Psoas muscle (tissue), 8 donors: ENCODE measurements at regions of chr17 and their contacts with region 1.

Region 1: DNA sequence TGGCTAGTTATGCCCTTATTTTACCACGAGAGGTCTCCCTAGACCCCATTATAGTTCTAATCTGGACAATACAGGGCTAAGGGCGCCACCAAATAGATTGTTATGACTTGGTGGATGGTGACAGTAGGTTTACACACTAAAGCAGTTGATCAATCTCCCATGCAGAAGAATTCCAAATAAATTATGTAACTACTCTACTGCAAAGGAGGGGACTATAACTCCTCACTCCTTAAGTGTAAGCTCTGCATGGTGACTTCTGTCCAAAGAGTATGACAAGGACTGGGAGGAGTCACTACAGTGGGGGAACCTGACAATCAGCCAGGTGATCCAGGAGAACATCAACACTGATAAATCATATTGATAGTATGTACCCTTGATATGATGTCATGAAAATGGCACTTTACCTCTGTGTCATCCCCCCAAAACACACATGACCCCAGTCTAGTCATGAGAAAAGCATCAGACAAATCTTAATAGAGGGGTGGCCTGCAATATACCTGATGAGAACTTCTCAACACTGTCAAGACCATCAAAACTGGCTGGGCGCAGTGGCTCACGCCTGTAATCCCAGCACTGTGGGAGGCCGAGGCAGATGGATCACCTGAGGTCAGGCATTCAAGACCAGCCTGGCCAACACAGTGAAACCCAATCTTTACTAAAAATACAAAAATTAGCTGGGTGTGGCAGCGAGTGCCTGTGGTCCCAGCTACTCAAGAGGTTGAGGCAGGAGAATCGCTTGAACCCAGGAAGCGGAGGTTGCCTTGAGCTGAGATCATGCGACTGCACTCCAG is 20.1 kb upstream of the YPEL2 start:
- DNase-seq: no peak
- ATAC-seq: peak; percentile 93 to 98 (median 96)
- H3K4me3 ChIP-seq: no peak overlapping the region
- H3K27ac ChIP-seq: no peak overlapping the region
- H3K4me1 ChIP-seq: peaks cover 9% of the 10 kb centered on the region
- H3K27me3 ChIP-seq: no peaks in the 10 kb centered on the region
- CTCF ChIP-seq: peak; percentile 80

Region 2: DNA sequence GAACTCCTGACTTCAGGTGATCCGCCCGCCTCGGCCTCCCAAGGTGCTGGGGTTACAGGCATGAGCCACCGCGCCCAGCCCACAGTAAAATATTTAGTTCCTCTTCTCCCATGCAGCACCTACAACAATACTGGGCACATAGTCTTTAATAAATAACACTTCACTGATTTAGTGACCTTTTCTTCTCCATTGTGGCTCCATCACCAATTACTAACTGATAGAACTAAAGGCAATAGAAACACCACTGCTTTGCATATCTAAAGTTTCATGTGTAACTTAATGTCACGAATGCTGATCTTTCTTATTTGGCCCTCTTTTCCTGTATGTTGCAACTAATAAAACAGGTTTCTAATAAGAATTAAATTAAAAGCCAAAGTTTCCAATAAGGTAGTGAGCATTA is 243.6 kb before region 1 on chr17:
- intact Hi-C with region 1: no loop called
- DNase-seq: peak in 1 of 2 donors; percentile 36
- ATAC-seq: no peak
- H3K4me3 ChIP-seq: no peak overlapping the region
- H3K27ac ChIP-seq: no peak overlapping the region
- H3K4me1 ChIP-seq: no peaks in the 10 kb centered on the region
- H3K27me3 ChIP-seq: no peaks in the 10 kb centered on the region
- CTCF ChIP-seq: no peak

Region 3: GRCh38 chr17:59084154-59084553 is 227.2 kb before region 1 on chr17:
- intact Hi-C with region 1: no loop called
- DNase-seq: no peak
- ATAC-seq: no peak
- H3K4me3 ChIP-seq: no peak overlapping the region
- H3K27ac ChIP-seq: no peak overlapping the region
- H3K4me1 ChIP-seq: no peaks in the 10 kb centered on the region
- H3K27me3 ChIP-seq: no peaks in the 10 kb centered on the region
- CTCF ChIP-seq: no peak

Region 4: GRCh38 chr17:59178266-59178978 is 132.9 kb before region 1 on chr17:
- intact Hi-C with region 1: no loop called
- DNase-seq: no peak
- ATAC-seq: no peak
- H3K4me3 ChIP-seq: no peak overlapping the region
- H3K27ac ChIP-seq: no peak overlapping the region
- H3K4me1 ChIP-seq: no peaks in the 10 kb centered on the region
- H3K27me3 ChIP-seq: no peaks in the 10 kb centered on the region
- CTCF ChIP-seq: no peak

Region 5: GRCh38 chr17:59346314-59346713 is 35.0 kb after region 1 on chr17:
- intact Hi-C with region 1: loop called in 1 of 2 experiments (anchors 1 kb)
- DNase-seq: no peak
- ATAC-seq: no peak
- H3K4me3 ChIP-seq: no peak overlapping the region
- H3K27ac ChIP-seq: peak overlapping the region; percentile 55
- H3K4me1 ChIP-seq: peaks cover 80% of the 10 kb centered on the region
- H3K27me3 ChIP-seq: no peaks in the 10 kb centered on the region
- CTCF ChIP-seq: no peak

Region 6: GRCh38 chr17:59440784-59441441 is 129.6 kb after region 1 on chr17:
- intact Hi-C with region 1: loop called (anchors 1 to 5 kb)
- DNase-seq: peak; percentile 84 to 90
- ATAC-seq: peak; percentile 93 to 95 (median 94)
- H3K4me3 ChIP-seq: no peak overlapping the region
- H3K27ac ChIP-seq: peak overlapping the region; percentile 76
- H3K4me1 ChIP-seq: peaks cover 38% of the 10 kb centered on the region
- H3K27me3 ChIP-seq: no peaks in the 10 kb centered on the region
- CTCF ChIP-seq: peak; percentile 90

Region 7: GRCh38 chr17:59513934-59514841 is 202.9 kb after region 1 on chr17:
- intact Hi-C with region 1: no loop called
- DNase-seq: peak; percentile 67 to 76
- ATAC-seq: no peak
- H3K4me3 ChIP-seq: no peak overlapping the region
- H3K27ac ChIP-seq: no peak overlapping the region
- H3K4me1 ChIP-seq: no peaks in the 10 kb centered on the region
- H3K27me3 ChIP-seq: no peaks in the 10 kb centered on the region
- CTCF ChIP-seq: no peak

Region 8: GRCh38 chr17:59558977-59559376 is 247.7 kb after region 1 on chr17:
- intact Hi-C with region 1: loop called (anchors 2 to 10 kb)
- DNase-seq: no peak
- ATAC-seq: no peak
- H3K4me3 ChIP-seq: no peak overlapping the region
- H3K27ac ChIP-seq: no peak overlapping the region
- H3K4me1 ChIP-seq: no peaks in the 10 kb centered on the region
- H3K27me3 ChIP-seq: no peaks in the 10 kb centered on the region
- CTCF ChIP-seq: peak; percentile 26

Region 9: GRCh38 chr17:59565171-59565969 is 254.0 kb after region 1 on chr17 and contains the start of gene DHX40:
- intact Hi-C with region 1: loop called in 1 of 2 experiments (anchors 2 kb)
- DNase-seq: peak; percentile 94 to 97
- ATAC-seq: peak; percentile 98 to 99 (median 99)
- H3K4me3 ChIP-seq: peak within 1 kb of the TSS; percentile 74
- H3K27ac ChIP-seq: peak within 1 kb of the TSS; percentile 82
- H3K4me1 ChIP-seq: peaks cover 6% of the 10 kb centered on the region
- H3K27me3 ChIP-seq: no peaks in the 10 kb centered on the region
- CTCF ChIP-seq: no peak
- total RNA-seq, gene DHX40: 17.2 to 21.8 (median 20.1) TPM